Common myeloid progenitor, CD34-positive (primary cell): ENCODE measurements at regions of chr1 and their contacts with region 1.

Region 1: GRCh38 chr1:156838981-156839410 is 19.9 kb downstream of the INSRR start:
- DNase-seq: peak in 2 of 3 donors; percentile 59 to 68
- H3K4me3 ChIP-seq: no peak overlapping the region
- H3K27ac ChIP-seq: no peak overlapping the region
- H3K4me1 ChIP-seq: no peaks in the 10 kb centered on the region
- H3K27me3 ChIP-seq: peaks cover 0 to 42% (median 26%) of the 10 kb centered on the region in 5 experiments

Region 2: DNA sequence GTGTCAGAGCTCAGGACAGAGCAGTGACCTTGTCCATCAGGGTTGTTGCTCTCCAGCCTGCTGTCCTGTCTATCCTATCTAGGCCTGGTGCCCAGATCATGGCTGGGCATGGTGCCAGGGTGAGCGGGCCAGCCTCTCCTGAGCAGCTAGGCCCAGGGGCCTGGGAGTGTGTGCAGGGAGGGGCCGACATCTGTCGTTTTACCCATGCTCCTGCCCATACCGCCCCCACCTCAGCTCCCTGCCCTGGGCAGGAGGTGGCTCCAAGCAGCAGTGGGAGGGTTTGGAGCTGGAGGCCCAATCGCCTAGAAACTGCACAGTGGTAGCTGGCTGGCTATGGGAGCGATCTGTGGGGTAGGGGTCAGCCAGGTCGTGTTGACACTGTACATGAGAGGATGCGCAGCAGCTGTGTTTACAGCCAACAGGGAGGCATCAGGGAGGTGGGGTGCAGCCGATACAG is 13.4 kb after region 1 on chr1:
- CTCF ChIA-PET with region 1: interaction called, 119 read pairs
- POLR2A ChIA-PET with region 1: interaction called, 3 read pairs
- DNase-seq: no peak
- H3K4me3 ChIP-seq: no peak overlapping the region
- H3K27ac ChIP-seq: no peak overlapping the region
- H3K4me1 ChIP-seq: peaks cover 0 to 9% (median 5%) of the 10 kb centered on the region in 4 experiments
- H3K27me3 ChIP-seq: peaks cover 0 to 47% (median 30%) of the 10 kb centered on the region in 5 experiments

Region 3: DNA sequence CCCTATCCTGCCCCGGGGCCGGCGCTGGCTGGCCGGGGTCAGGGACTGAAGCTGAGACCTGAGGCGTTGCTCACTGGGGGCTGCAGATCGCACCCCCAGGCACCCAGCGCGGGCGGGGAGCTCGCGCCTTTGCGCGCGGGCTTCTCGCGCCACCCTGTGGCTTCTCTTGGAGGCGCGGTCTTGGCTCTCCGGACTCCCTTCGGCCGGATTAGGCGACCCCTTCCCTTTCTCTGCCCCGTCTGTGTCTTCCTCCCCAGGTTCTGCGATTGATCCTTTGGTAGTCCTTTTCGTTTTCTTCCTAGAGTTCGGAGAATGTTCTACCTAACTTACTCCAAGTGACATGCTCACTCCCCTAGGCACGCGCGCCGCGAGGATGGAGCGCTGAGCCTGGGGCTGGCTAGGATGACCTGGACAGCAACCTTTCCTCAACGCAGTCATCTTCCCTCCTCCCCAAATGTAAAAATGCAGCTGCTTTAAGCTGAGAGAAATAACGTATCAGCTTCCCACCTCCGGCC is 21.2 kb after region 1 on chr1:
- CTCF ChIA-PET with region 1: interaction called, 119 read pairs
- POLR2A ChIA-PET with region 1: interaction called, 3 read pairs
- DNase-seq: peak; percentile 31 to 61 (median 57)
- H3K4me3 ChIP-seq: peak overlapping the region; percentile 22 to 69 (median 54)
- H3K27ac ChIP-seq: no peak overlapping the region
- H3K4me1 ChIP-seq: peaks cover 2 to 43% (median 39%) of the 10 kb centered on the region in 4 experiments
- H3K27me3 ChIP-seq: peaks cover 0 to 78% (median 47%) of the 10 kb centered on the region in 5 experiments